ENCODE measurements at regions of chr2 and their contacts with region 1.

Region 1: GRCh38 chr2:16293398-16293797 is 353.0 kb downstream of the MYCN start:
- DNase-seq: no peak
- H3K4me3 Mint-ChIP-seq: no peak overlapping the region
- H3K27ac Mint-ChIP-seq: no peak overlapping the region
- H3K4me1 Mint-ChIP-seq: no peaks in the 10 kb centered on the region
- H3K27me3 Mint-ChIP-seq: no peaks in the 10 kb centered on the region
- CTCF ChIP-seq: no peak

Region 2: DNA sequence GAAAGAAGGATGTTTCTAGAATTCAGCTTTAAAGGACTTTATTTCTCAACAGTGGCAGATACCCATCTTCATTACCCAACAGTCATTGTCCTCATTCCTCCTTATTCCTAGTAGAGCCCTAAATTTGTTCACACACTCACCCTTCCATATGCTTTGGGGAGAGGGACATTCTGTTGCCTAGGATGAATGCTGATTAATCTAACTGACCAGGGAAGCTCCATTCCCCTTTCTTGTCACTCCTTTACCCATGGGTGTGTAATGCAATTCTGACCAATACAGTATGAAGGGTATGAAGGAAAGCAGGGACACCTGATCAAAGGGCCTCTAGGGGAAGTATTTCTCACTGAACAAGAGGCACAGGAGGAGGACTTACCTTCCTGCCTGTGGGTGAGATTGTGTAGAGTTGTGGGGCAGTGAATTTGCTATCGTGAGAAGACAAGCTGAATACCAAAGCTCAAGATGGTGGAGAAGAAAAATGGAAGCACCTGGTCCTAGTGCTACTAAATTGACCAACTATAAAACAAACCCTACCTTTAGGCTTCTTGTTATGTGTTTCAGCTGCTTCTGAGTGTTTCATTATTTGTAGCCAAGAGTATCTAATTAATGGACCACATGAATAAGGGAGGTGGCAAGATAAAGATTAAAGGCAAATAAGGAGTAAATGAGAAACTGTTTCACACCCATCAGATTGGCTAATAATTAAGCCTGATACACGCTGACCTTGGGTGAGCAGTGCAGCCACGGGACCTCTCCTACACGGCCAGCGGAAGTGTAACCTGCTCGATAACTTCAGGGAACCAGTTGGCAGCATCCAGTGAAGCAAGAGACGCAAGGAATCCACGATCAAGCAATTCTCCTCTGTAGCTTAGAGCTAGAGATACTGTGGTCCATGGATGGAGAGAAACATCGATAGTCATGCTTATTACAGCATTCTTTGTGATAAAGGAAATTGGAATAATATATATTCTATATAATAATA is 150.7 kb before region 1 on chr2:
- CTCF ChIA-PET with region 1: no interaction called
- POLR2A ChIA-PET with region 1: no interaction called
- intact Hi-C with region 1: no loop called
- DNase-seq: no peak
- H3K4me3 Mint-ChIP-seq: no peak overlapping the region
- H3K27ac Mint-ChIP-seq: no peak overlapping the region
- H3K4me1 Mint-ChIP-seq: peaks cover 5% of the 10 kb centered on the region
- H3K27me3 Mint-ChIP-seq: no peaks in the 10 kb centered on the region
- CTCF ChIP-seq: no peak

Region 3: GRCh38 chr2:16487686-16488085 is 194.3 kb after region 1 on chr2:
- CTCF ChIA-PET with region 1: no interaction called
- POLR2A ChIA-PET with region 1: no interaction called
- intact Hi-C with region 1: loop called (anchors 5 kb)
- DNase-seq: peak; percentile 60
- H3K4me3 Mint-ChIP-seq: no peak overlapping the region
- H3K27ac Mint-ChIP-seq: no peak overlapping the region
- H3K4me1 Mint-ChIP-seq: no peaks in the 10 kb centered on the region
- H3K27me3 Mint-ChIP-seq: peaks cover 22% of the 10 kb centered on the region
- CTCF ChIP-seq: peak; percentile 42

Measured in MCF 10A (cell line).